MCF 10A (cell line): ENCODE measurements at regions of chr12 and their contacts with region 1.

Region 1: GRCh38 chr12:120580787-120581723 is at the start of gene POP5:
- DNase-seq: peak; percentile 98
- H3K4me3 Mint-ChIP-seq: peak within 1 kb of the TSS; percentile 99
- H3K27ac Mint-ChIP-seq: peak within 1 kb of the TSS; percentile 91
- H3K4me1 Mint-ChIP-seq: peaks cover 16% of the 10 kb centered on the region
- H3K27me3 Mint-ChIP-seq: no peaks in the 10 kb centered on the region
- CTCF ChIP-seq: no peak
- total RNA-seq, gene POP5: 24.3 and 29.9 TPM in 2 replicates

Region 2: GRCh38 chr12:120534203-120534702 is 46.8 kb before region 1 on chr12 and contains the start of gene RNF10:
- CTCF ChIA-PET with region 1: interaction called, 4 read pairs
- POLR2A ChIA-PET with region 1: interaction called, 30 read pairs
- intact Hi-C with region 1: loop called (anchors 1 kb)
- DNase-seq: peak; percentile 88
- H3K4me3 Mint-ChIP-seq: peak within 1 kb of the TSS; percentile 86
- H3K27ac Mint-ChIP-seq: peak within 1 kb of the TSS; percentile 92
- H3K4me1 Mint-ChIP-seq: peaks cover 21% of the 10 kb centered on the region
- H3K27me3 Mint-ChIP-seq: no peaks in the 10 kb centered on the region
- CTCF ChIP-seq: no peak
- total RNA-seq, gene RNF10: 166 and 222 TPM in 2 replicates

Region 3: GRCh38 chr12:120686690-120687577 is 105.9 kb after region 1 on chr12 and contains the start of gene MLEC:
- CTCF ChIA-PET with region 1: interaction called, 7 read pairs
- POLR2A ChIA-PET with region 1: interaction called, 8 read pairs
- intact Hi-C with region 1: loop called (anchors 1 kb)
- DNase-seq: peak; percentile 98
- H3K4me3 Mint-ChIP-seq: peak within 1 kb of the TSS; percentile 87
- H3K27ac Mint-ChIP-seq: peak within 1 kb of the TSS; percentile 86
- H3K4me1 Mint-ChIP-seq: peaks cover 27% of the 10 kb centered on the region
- H3K27me3 Mint-ChIP-seq: no peaks in the 10 kb centered on the region
- CTCF ChIP-seq: no peak
- total RNA-seq, gene MLEC: 107 and 144 TPM in 2 replicates

Region 4: GRCh38 chr12:121005346-121005815 is 424.3 kb after region 1 on chr12:
- CTCF ChIA-PET with region 1: interaction called, 12 read pairs
- POLR2A ChIA-PET with region 1: no interaction called
- intact Hi-C with region 1: loop called (anchors 2 kb)
- DNase-seq: peak; percentile 53
- H3K4me3 Mint-ChIP-seq: no peak overlapping the region
- H3K27ac Mint-ChIP-seq: no peak overlapping the region
- H3K4me1 Mint-ChIP-seq: no peaks in the 10 kb centered on the region
- H3K27me3 Mint-ChIP-seq: no peaks in the 10 kb centered on the region
- CTCF ChIP-seq: peak; percentile 79

Region 5: GRCh38 chr12:121110211-121110940 is 529.3 kb after region 1 on chr12:
- CTCF ChIA-PET with region 1: interaction called, 11 read pairs
- POLR2A ChIA-PET with region 1: no interaction called
- intact Hi-C with region 1: loop called (anchors 1 kb)
- DNase-seq: peak; percentile 76
- H3K4me3 Mint-ChIP-seq: no peak overlapping the region
- H3K27ac Mint-ChIP-seq: no peak overlapping the region
- H3K4me1 Mint-ChIP-seq: no peaks in the 10 kb centered on the region
- H3K27me3 Mint-ChIP-seq: no peaks in the 10 kb centered on the region
- CTCF ChIP-seq: peak; percentile 94